ENCODE measurements at regions of chr15 and their contacts with region 1.

Region 1: DNA sequence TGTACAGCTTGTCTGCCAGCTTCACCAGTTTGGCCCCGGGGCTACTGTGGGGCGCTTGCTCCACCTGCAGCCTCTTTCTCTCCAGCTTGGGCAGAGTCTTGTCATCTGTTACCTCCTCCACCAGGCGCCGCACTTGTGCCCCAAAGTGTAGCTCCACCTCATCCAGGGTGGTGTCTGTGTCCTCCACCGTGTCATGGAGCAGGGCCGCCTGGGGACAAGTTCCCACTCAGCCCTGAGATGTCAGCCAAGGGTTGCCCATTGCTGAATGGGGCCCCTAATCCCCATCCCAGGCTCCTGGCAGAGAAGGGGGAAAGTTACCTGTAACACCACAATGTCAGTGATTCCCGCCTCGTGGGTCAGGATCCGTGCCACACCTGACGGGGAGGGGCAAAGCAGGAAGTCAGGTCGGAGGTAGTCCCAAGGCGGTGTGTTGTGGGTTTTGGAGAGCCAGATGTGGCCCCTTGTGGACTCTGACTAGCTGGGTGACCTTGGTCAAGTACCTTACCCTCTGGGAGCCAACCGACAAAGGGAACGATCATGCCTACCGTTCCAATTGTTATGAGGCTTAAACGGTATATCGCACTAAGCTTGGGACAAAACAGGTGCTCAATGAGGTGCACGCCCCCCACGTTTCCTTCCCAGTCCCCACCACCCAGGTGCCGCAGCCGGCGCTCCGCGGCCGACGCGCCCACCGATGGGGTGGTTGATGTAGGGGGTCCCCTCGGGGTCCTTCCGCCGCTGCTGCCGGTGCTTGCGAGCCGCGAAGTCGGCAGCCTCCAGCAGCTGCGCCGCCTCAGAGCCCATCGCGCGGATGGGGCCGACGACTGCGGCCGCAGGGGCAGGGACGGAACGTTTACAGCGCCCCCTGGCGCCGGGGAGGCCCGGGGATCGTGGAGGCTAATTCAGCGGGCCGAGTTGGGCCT is at the start of gene HDDC3:
- DNase-seq: peak; percentile 84 to 89
- H3K4me3 ChIP-seq: peak within 1 kb of the TSS; percentile 88
- H3K27ac ChIP-seq: peak within 1 kb of the TSS; percentile 58
- H3K4me1 ChIP-seq: peaks cover 33% of the 10 kb centered on the region
- H3K27me3 ChIP-seq: no peaks in the 10 kb centered on the region
- CTCF ChIP-seq: peak; percentile 88
- total RNA-seq, gene HDDC3: 18.1 and 20.9 TPM in 2 replicates

Region 2: GRCh38 chr15:89613031-89613430 is 1319.0 kb before region 1 on chr15:
- CTCF ChIA-PET with region 1: interaction called, 11 read pairs
- POLR2A ChIA-PET with region 1: no interaction called
- intact Hi-C with region 1: no loop called
- DNase-seq: no peak
- H3K4me3 ChIP-seq: no peak overlapping the region
- H3K27ac ChIP-seq: no peak overlapping the region
- H3K4me1 ChIP-seq: no peaks in the 10 kb centered on the region
- H3K27me3 ChIP-seq: no peaks in the 10 kb centered on the region
- CTCF ChIP-seq: no peak

Region 3: DNA sequence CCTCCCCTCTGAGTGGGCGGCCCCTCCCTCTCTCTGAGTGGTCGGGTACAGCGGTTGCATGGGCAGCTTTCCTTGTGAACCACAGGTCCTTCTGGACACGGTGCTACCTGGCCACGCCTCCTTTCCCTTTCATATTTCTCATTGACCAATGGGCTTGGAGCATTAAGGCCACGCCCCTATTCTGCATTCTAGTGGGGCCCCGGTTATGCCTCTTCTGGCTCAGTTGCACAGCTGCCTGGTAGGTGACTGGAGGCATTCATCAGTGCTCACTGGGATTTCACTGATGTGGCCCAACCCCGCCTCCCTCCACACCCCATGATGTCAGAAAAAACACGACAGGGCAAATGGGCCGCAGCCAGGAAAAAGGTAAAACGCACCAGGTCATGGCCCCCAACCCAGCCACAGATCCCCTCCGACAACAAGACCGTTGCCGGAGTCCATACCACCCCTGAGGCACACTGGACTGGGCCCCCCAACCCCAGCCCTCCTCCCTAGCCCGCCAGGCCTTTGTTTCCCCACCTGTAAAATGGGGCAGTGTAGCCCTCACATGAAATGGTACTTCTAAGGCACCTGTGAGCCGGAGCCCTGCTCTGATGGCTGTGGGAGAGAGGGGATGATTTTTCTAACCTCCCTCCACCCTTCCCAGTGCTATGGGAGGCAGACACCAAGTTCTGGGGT is 640.2 kb before region 1 on chr15:
- CTCF ChIA-PET with region 1: interaction called, 4 read pairs
- POLR2A ChIA-PET with region 1: no interaction called
- intact Hi-C with region 1: loop called (anchors 1 kb)
- DNase-seq: peak; percentile 15 to 47
- H3K4me3 ChIP-seq: no peak overlapping the region
- H3K27ac ChIP-seq: no peak overlapping the region
- H3K4me1 ChIP-seq: peaks cover 4% of the 10 kb centered on the region; the same call in 1 of the 2 replicates
- H3K27me3 ChIP-seq: no peaks in the 10 kb centered on the region
- CTCF ChIP-seq: no peak

Region 4: GRCh38 chr15:90648137-90649070 is 283.6 kb before region 1 on chr15:
- CTCF ChIA-PET with region 1: interaction called, 10 read pairs
- POLR2A ChIA-PET with region 1: interaction called, 3 read pairs
- intact Hi-C with region 1: loop called (anchors 1 kb)
- DNase-seq: peak; percentile 41 to 69
- H3K4me3 ChIP-seq: peak overlapping the region; percentile 21; the same call in 1 of the 2 replicates
- H3K27ac ChIP-seq: peak overlapping the region; percentile 41
- H3K4me1 ChIP-seq: peaks cover 24% of the 10 kb centered on the region
- H3K27me3 ChIP-seq: no peaks in the 10 kb centered on the region
- CTCF ChIP-seq: peak; percentile 97

Region 5: GRCh38 chr15:90942354-90943120 is 10.5 kb after region 1 on chr15:
- CTCF ChIA-PET with region 1: interaction called, 12 read pairs
- POLR2A ChIA-PET with region 1: no interaction called
- intact Hi-C with region 1: no loop called
- DNase-seq: no peak
- H3K4me3 ChIP-seq: no peak overlapping the region
- H3K27ac ChIP-seq: no peak overlapping the region
- H3K4me1 ChIP-seq: no peaks in the 10 kb centered on the region
- H3K27me3 ChIP-seq: no peaks in the 10 kb centered on the region
- CTCF ChIP-seq: no peak

Region 6: DNA sequence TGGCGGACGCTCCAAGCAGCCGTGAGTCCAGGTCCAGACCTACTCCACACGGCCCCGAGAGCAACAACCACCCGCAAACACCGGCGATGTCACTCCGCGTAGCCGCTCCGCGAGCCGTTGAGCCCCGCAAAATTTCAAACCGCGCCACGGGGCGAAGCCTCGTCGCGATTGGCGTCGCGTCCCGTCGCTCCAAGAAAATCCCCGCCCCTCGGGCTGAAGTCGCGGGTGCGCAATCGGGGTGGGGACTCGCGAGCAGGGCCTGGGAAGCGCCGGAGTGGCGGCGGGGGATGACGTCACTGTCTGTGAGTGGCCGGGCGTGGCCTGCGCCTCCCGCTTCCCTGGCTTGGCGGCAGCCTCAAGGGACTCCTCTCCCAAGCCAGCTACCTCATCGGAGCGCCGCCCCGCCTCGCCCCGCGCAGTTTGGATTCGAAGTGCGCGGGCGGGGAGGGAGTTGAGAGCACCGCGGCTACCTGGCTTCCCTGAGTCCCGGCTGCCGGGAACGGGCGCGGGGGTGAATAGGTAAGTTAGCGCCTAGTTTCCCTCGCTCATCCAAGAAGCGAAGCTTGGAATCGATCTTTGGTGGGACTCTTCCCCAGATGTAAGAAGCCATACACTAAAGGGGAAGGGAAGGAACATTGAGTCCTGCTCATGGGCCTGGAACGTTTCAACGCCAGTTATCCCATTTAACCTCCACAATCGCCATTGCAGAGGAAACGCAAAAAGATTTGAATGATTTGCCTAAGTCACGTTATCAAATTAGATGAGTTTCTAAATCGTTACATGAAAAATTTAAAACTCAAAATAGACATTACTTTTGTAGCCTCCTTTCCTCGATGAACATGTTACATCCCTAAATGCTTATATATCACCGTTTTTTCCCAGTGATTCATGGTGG is 62.7 kb after region 1 on chr15 and contains the start of gene PRC1:
- CTCF ChIA-PET with region 1: no interaction called
- POLR2A ChIA-PET with region 1: interaction called, 3 read pairs
- intact Hi-C with region 1: loop called (anchors 2 kb)
- DNase-seq: peak; percentile 93 to 99
- H3K4me3 ChIP-seq: peak within 1 kb of the TSS; percentile 73
- H3K27ac ChIP-seq: peak within 1 kb of the TSS; percentile 67
- H3K4me1 ChIP-seq: peaks cover 13% of the 10 kb centered on the region
- H3K27me3 ChIP-seq: no peaks in the 10 kb centered on the region
- CTCF ChIP-seq: no peak
- total RNA-seq, gene PRC1: 145 and 180 TPM in 2 replicates

Region 7: GRCh38 chr15:91224755-91225380 is 292.9 kb after region 1 on chr15:
- CTCF ChIA-PET with region 1: no interaction called
- POLR2A ChIA-PET with region 1: no interaction called
- intact Hi-C with region 1: no loop called
- DNase-seq: no peak
- H3K4me3 ChIP-seq: no peak overlapping the region
- H3K27ac ChIP-seq: no peak overlapping the region
- H3K4me1 ChIP-seq: no peaks in the 10 kb centered on the region
- H3K27me3 ChIP-seq: peaks cover 64% of the 10 kb centered on the region
- CTCF ChIP-seq: peak; percentile 74